ENCODE measurements at regions of chr11 and their contacts with region 1.

Region 1: GRCh38 chr11:87290304-87290922 is 252.7 kb downstream of the TMEM135 start:
- DNase-seq: peak; percentile 93
- ATAC-seq: peak; percentile 65
- H3K4me3 ChIP-seq: no peak overlapping the region
- H3K27ac ChIP-seq: no peak overlapping the region
- H3K4me1 ChIP-seq: no peaks in the 10 kb centered on the region
- H3K27me3 ChIP-seq: no peaks in the 10 kb centered on the region
- CTCF ChIP-seq: peak; percentile 92

Region 2: DNA sequence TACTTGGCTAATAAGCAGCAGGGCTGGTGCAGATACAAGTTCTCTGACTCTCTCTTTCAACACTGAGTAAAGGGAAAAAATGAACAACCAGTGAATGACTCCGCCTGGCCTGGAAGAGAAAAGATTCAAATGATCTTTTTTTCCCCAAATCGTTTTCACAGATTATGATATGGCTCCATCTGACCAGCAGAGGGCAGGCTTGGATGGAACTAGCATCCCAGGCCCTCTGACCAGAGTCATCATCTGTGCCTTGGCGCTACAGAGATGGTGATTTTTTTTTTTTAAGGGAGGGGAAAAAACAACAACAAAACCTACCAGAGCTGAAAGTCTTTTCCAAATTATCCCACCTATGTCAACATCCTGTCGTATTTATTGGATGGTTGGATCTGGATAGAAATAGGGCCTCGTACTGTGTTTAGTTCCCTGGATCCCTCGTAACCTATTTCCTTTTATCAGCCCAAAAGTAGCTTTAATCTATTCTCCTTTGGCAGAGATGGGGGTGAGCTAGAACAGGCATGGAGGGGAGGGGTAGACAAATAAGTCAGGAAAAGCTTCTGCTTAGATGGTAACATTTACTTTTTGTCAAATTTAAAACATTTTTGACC is 420.3 kb before region 1 on chr11:
- CTCF ChIA-PET with region 1: no interaction called
- POLR2A ChIA-PET with region 1: no interaction called
- intact Hi-C with region 1: loop called (anchors 5 kb)
- DNase-seq: peak; percentile 58
- ATAC-seq: peak; percentile 80
- H3K4me3 ChIP-seq: no peak overlapping the region
- H3K27ac ChIP-seq: no peak overlapping the region
- H3K4me1 ChIP-seq: no peaks in the 10 kb centered on the region; the same call in 1 of the 2 replicates
- H3K27me3 ChIP-seq: no peaks in the 10 kb centered on the region
- CTCF ChIP-seq: peak; percentile 76

Region 3: DNA sequence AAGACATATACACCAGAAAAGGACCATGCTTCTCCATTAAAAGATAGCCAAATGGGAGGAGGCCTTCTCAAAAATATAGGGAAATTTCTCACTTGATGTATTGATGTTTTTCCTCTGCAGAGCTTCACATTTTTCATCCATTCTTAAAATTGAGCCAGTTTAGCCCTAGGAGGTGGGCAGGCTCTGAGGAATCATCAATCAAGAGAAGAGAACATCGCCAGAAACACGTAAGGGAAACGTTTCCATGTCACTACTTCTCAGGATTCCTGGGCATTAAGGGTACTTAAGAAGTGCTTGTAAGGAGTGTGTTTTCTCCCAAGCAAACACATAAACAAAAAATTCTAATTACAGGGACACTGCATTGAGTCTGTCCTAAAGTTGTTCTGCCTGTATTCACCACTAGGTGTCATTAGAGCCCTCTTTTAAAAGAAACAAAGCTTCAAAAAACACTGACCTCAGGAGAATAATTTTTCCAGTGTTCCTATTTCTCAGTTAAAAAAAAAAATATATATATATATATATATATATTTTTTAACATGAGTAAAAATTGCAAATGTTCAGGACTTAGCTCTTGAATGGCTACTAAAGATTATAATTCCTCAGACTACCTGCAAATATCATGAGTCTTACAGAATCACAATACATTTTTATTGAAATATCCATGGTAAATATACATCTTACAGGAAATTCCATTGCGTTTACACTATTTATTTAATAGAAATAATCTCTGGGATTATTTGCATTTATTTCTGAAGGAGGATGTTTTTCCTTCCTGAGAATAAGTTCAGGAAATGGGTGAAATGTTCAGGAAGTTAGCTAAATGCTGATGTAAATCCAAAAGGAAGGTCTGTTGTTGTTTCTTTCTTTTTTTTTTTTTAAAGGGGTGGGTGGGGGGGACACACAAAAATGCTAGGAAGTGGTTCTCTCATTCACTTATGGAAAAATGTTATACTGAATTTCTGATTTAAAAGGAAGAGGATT is 351.2 kb before region 1 on chr11:
- CTCF ChIA-PET with region 1: interaction called, 3 read pairs
- POLR2A ChIA-PET with region 1: no interaction called
- intact Hi-C with region 1: loop called (anchors 2 kb)
- DNase-seq: peak; percentile 83
- ATAC-seq: no peak
- H3K4me3 ChIP-seq: peak overlapping the region; percentile 23; the same call in 1 of the 2 replicates
- H3K27ac ChIP-seq: peak overlapping the region; percentile 88
- H3K4me1 ChIP-seq: peaks cover 60% of the 10 kb centered on the region
- H3K27me3 ChIP-seq: no peaks in the 10 kb centered on the region
- CTCF ChIP-seq: peak; percentile 71

Region 4: GRCh38 chr11:86990515-86990914 is 299.9 kb before region 1 on chr11:
- CTCF ChIA-PET with region 1: no interaction called
- POLR2A ChIA-PET with region 1: no interaction called
- intact Hi-C with region 1: loop called (anchors 1 kb)
- DNase-seq: peak; percentile 82
- ATAC-seq: peak; percentile 43
- H3K4me3 ChIP-seq: no peak overlapping the region
- H3K27ac ChIP-seq: no peak overlapping the region
- H3K4me1 ChIP-seq: peaks cover 9% of the 10 kb centered on the region
- H3K27me3 ChIP-seq: no peaks in the 10 kb centered on the region
- CTCF ChIP-seq: no peak

Region 5: DNA sequence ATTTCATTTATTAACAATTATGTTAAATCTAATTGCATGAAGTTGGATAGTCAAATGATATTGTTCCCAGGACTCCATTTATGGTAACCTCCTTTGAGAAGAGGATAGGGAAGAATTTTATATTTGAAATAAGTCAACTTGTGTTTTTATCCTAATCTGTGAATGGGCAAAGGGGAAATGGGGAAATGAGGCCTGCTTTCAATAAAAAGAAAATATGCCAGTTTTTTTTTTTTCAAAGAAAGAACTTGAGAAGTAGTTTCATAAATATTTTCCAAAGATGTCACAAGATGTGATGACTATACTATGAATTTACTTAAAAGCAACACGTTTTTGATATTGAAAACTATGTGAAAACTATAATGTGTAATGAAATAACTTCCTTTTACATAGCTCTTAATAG is 50.9 kb before region 1 on chr11:
- CTCF ChIA-PET with region 1: no interaction called
- POLR2A ChIA-PET with region 1: no interaction called
- intact Hi-C with region 1: no loop called
- DNase-seq: no peak
- ATAC-seq: no peak
- H3K4me3 ChIP-seq: no peak overlapping the region
- H3K27ac ChIP-seq: no peak overlapping the region
- H3K4me1 ChIP-seq: no peaks in the 10 kb centered on the region; the same call in 1 of the 2 replicates
- H3K27me3 ChIP-seq: no peaks in the 10 kb centered on the region
- CTCF ChIP-seq: no peak

Measured in PC-3 (cell line).